ENCODE measurements at regions of chr3 and their contacts with region 1.

Region 1: GRCh38 chr3:197580253-197580691 is 24.5 kb upstream of the BDH1 start:
- DNase-seq: peak in 1 of 2 experiments; percentile 60
- H3K4me3 ChIP-seq: peak overlapping the region in 1 of 4 experiments; percentile 11; a peak in 1 of 8 replicates
- H3K27ac ChIP-seq: peak overlapping the region; percentile 44; the same call in 1 of the 2 replicates
- H3K4me1 ChIP-seq: peaks cover 11 to 27% (median 23%) of the 10 kb centered on the region in 4 experiments
- H3K27me3 ChIP-seq: no peaks in the 10 kb centered on the region
- CTCF ChIP-seq: no peak
- EP300 ChIP-seq: 0 out of 3 replicates have a peak, but pooled peaks of 1 of the 2 experiments have one; percentile 37
- POLR2A ChIP-seq: no peak
- RAD21 ChIP-seq: no peak

Region 2: GRCh38 chr3:197547306-197548011 is 32.8 kb before region 1 on chr3:
- CTCF ChIA-PET with region 1: interaction called, 10 read pairs
- POLR2A ChIA-PET with region 1: interaction called, 3 read pairs
- DNase-seq: peak in 1 of 2 experiments; percentile 65
- H3K4me3 ChIP-seq: no peak overlapping the region
- H3K27ac ChIP-seq: no peak overlapping the region
- H3K4me1 ChIP-seq: peaks cover 10 to 35% (median 17%) of the 10 kb centered on the region in 4 experiments
- H3K27me3 ChIP-seq: no peaks in the 10 kb centered on the region; a peak in 2 of 7 replicates
- CTCF ChIP-seq: peak; percentile 63 to 78 (median 75)
- EP300 ChIP-seq: no peak
- POLR2A ChIP-seq: no peak
- RAD21 ChIP-seq: peak; percentile 82 to 86

Region 3: GRCh38 chr3:197554562-197555280 is 25.6 kb before region 1 on chr3:
- CTCF ChIA-PET with region 1: interaction called, 4 read pairs
- POLR2A ChIA-PET with region 1: interaction called, 10 read pairs
- DNase-seq: peak; percentile 92 to 96
- H3K4me3 ChIP-seq: peak overlapping the region; percentile 62 to 79 (median 69)
- H3K27ac ChIP-seq: peak overlapping the region; percentile 86
- H3K4me1 ChIP-seq: peaks cover 10 to 14% (median 11%) of the 10 kb centered on the region in 4 experiments
- H3K27me3 ChIP-seq: peaks cover 0 to 3% (median 1%) of the 10 kb centered on the region in 4 experiments; a peak in 2 of 7 replicates
- CTCF ChIP-seq: peak; percentile 54 to 70 (median 55)
- EP300 ChIP-seq: no peak
- POLR2A ChIP-seq: peak in 1 of 2 experiments; percentile 52; a peak in 2 of 3 replicates
- RAD21 ChIP-seq: peak; percentile 15 to 45; a peak in 2 of 4 replicates